ENCODE measurements at regions of chr10 and their contacts with region 1.

Region 1: GRCh38 chr10:11515596-11516430 is 95.6 kb downstream of the USP6NL start:
- DNase-seq: peak; percentile 70
- ATAC-seq: peak; percentile 95
- H3K4me3 ChIP-seq: no peak overlapping the region
- H3K27ac ChIP-seq: no peak overlapping the region
- H3K4me1 ChIP-seq: no peaks in the 10 kb centered on the region
- H3K27me3 ChIP-seq: no peaks in the 10 kb centered on the region
- CTCF ChIP-seq: peak; percentile 93
- POLR2A ChIP-seq: peak; percentile 46; the same call in 1 of the 2 replicates
- RAD21 ChIP-seq: peak; percentile 96

Region 2: GRCh38 chr10:11225935-11226334 is 289.9 kb before region 1 on chr10:
- CTCF ChIA-PET with region 1: no interaction called
- POLR2A ChIA-PET with region 1: no interaction called
- dilution Hi-C with region 1: no loop called
- in situ Hi-C with region 1: no loop called
- intact Hi-C with region 1: no loop called
- DNase-seq: no peak
- ATAC-seq: no peak
- H3K4me3 ChIP-seq: no peak overlapping the region
- H3K27ac ChIP-seq: no peak overlapping the region
- H3K4me1 ChIP-seq: no peaks in the 10 kb centered on the region
- H3K27me3 ChIP-seq: no peaks in the 10 kb centered on the region
- CTCF ChIP-seq: no peak
- POLR2A ChIP-seq: no peak
- RAD21 ChIP-seq: no peak

Region 3: DNA sequence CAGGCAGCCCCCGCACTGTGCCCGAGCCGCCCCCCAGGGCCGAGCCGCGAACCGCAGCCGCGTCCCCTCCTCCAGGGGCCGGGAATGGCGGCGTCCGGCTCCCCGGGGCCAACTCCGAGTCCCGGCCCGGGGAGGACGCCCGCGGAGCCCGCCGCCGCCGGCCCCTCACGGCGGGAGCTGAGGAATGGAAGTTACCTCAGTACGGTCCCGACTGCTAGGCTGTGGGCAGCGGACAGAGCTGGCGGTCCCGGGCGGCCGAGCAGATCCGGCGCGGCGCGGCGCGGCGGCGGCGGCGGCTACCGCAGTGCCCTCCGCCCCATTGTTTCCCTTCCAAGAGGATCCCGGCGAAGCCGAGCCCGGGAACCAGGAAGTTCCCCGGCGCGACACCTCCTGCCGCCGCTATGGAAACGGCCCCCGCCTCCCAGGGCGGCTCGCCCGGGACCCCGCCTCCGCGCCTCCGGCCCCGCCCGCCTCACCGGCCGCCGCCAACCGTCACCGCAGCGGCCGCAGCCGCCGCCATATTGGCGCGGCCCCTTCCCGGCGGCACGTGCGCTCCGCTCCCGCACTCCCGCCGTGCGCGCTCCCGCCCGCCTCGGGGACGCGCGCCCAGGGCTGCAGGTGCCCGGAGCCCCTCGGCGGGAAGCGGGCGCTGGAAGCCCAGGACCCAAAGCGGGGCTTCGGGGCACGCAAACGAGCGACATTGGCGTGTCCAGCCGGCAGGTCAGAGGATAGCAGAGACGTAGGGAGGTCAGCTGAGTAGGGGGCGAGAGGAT is 95.6 kb after region 1 on chr10 and contains the start of gene USP6NL:
- CTCF ChIA-PET with region 1: no interaction called
- POLR2A ChIA-PET with region 1: no interaction called
- dilution Hi-C with region 1: no loop called
- in situ Hi-C with region 1: no loop called
- intact Hi-C with region 1: loop called (anchors 5 kb)
- DNase-seq: peak; percentile 74
- ATAC-seq: peak; percentile 97
- H3K4me3 ChIP-seq: peak within 1 kb of the TSS; percentile 87
- H3K27ac ChIP-seq: peak within 1 kb of the TSS; percentile 59; the same call in 1 of the 2 replicates
- H3K4me1 ChIP-seq: peaks cover 4% of the 10 kb centered on the region
- H3K27me3 ChIP-seq: no peaks in the 10 kb centered on the region
- CTCF ChIP-seq: no peak
- POLR2A ChIP-seq: peak; percentile 56; the same call in 1 of the 2 replicates
- RAD21 ChIP-seq: no peak
- total RNA-seq, gene USP6NL: 9.1 and 11.9 TPM in 2 replicates

Region 4: GRCh38 chr10:11625019-11625735 is 109.4 kb after region 1 on chr10:
- CTCF ChIA-PET with region 1: no interaction called
- POLR2A ChIA-PET with region 1: no interaction called
- dilution Hi-C with region 1: no loop called
- in situ Hi-C with region 1: no loop called
- intact Hi-C with region 1: no loop called
- DNase-seq: no peak
- ATAC-seq: no peak
- H3K4me3 ChIP-seq: no peak overlapping the region
- H3K27ac ChIP-seq: no peak overlapping the region
- H3K4me1 ChIP-seq: no peaks in the 10 kb centered on the region
- H3K27me3 ChIP-seq: peaks cover 3% of the 10 kb centered on the region
- CTCF ChIP-seq: no peak
- POLR2A ChIP-seq: no peak
- RAD21 ChIP-seq: no peak

Region 5: GRCh38 chr10:11719496-11720217 is 203.8 kb after region 1 on chr10:
- CTCF ChIA-PET with region 1: interaction called, 16 read pairs
- POLR2A ChIA-PET with region 1: no interaction called
- dilution Hi-C with region 1: no loop called
- in situ Hi-C with region 1: loop called (anchors 5 kb)
- intact Hi-C with region 1: loop called (anchors 2 kb)
- DNase-seq: no peak
- ATAC-seq: no peak
- H3K4me3 ChIP-seq: no peak overlapping the region
- H3K27ac ChIP-seq: no peak overlapping the region
- H3K4me1 ChIP-seq: no peaks in the 10 kb centered on the region
- H3K27me3 ChIP-seq: peaks cover 5% of the 10 kb centered on the region
- CTCF ChIP-seq: no peak
- POLR2A ChIP-seq: no peak
- RAD21 ChIP-seq: no peak

Region 6: GRCh38 chr10:11724938-11725776 is 209.3 kb after region 1 on chr10:
- CTCF ChIA-PET with region 1: interaction called, 16 read pairs
- POLR2A ChIA-PET with region 1: no interaction called
- dilution Hi-C with region 1: no loop called
- in situ Hi-C with region 1: loop called (anchors 5 kb)
- intact Hi-C with region 1: loop called (anchors 1 kb)
- DNase-seq: peak; percentile 79
- ATAC-seq: peak; percentile 96
- H3K4me3 ChIP-seq: no peak overlapping the region
- H3K27ac ChIP-seq: no peak overlapping the region
- H3K4me1 ChIP-seq: no peaks in the 10 kb centered on the region
- H3K27me3 ChIP-seq: peaks cover 10% of the 10 kb centered on the region
- CTCF ChIP-seq: peak; percentile 83
- POLR2A ChIP-seq: peak; percentile 28; the same call in 1 of the 2 replicates
- RAD21 ChIP-seq: peak; percentile 93

Region 7: DNA sequence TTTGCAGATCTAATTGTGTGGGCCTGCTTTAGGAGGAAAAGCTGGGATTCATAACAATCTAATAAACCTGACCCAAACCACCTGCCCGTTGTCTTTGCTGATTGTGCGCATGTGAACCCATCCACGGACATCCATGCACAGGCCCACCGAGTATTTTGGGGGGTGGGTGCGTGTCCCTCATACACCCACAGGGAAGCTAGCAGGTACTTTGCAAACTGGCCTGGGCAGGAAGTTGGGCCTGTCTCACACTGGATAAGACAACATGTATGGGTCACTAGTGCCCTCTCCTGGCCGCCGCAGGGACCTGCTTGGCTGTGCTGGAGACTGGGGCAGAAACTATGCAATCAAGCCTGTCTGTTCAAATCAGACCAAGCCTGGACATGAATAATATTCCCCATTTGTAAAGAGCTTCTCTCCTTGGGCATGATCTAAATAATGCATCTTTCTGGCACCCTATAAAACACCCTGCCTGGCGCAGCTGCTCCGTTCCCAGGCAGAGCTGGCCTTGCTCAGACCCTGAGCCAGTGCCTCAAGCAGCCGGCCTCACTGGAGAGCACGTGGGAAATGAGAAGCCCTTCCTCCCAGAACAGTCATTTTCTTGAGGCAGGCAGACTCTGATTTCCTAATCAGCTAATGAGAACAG is 242.1 kb after region 1 on chr10:
- CTCF ChIA-PET with region 1: interaction called, 23 read pairs
- POLR2A ChIA-PET with region 1: no interaction called
- dilution Hi-C with region 1: no loop called
- in situ Hi-C with region 1: loop called (anchors 10 kb)
- intact Hi-C with region 1: loop called (anchors 1 kb)
- DNase-seq: peak; percentile 81
- ATAC-seq: peak; percentile 98
- H3K4me3 ChIP-seq: no peak overlapping the region
- H3K27ac ChIP-seq: 0 out of 2 replicates have a peak overlapping the region, but pooled peaks have one; percentile 16
- H3K4me1 ChIP-seq: peaks cover 7% of the 10 kb centered on the region; the same call in 1 of the 2 replicates
- H3K27me3 ChIP-seq: no peaks in the 10 kb centered on the region
- CTCF ChIP-seq: peak; percentile 90
- POLR2A ChIP-seq: 0 out of 2 replicates have a peak, but pooled peaks have one; percentile 28
- RAD21 ChIP-seq: peak; percentile 89

Region 8: DNA sequence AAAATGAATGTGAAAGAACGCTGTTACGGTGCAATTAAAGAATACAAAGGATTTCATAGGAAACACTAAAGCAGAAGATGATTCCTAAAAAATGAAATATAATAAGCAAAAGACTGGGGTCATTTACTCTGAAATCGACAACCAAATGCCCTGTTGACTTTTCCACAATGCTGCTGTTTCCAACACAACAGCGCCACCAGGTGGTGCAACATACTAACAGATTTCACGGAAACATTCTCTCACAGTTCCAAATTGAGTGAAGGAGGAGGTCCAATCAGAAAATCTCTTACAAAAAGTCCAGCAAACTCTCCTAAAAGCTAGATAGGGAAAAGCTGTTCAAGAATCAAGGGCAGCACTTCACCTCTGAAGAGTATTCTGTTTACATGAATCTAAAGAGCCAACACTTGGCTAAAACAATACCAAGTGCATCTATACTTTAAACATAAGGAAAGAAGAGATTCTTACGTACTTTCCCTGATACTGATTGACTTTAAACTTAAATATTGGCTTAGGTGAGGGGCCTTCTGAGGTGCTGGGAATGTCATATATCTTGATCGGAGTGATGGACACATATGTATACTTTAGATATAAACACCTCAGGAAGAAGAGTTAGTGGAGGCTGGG is 470.9 kb after region 1 on chr10:
- CTCF ChIA-PET with region 1: no interaction called
- POLR2A ChIA-PET with region 1: no interaction called
- dilution Hi-C with region 1: no loop called
- in situ Hi-C with region 1: no loop called
- intact Hi-C with region 1: loop called (anchors 5 kb)
- DNase-seq: peak; percentile 84
- ATAC-seq: peak; percentile 89
- H3K4me3 ChIP-seq: no peak overlapping the region
- H3K27ac ChIP-seq: no peak overlapping the region
- H3K4me1 ChIP-seq: no peaks in the 10 kb centered on the region
- H3K27me3 ChIP-seq: no peaks in the 10 kb centered on the region
- CTCF ChIP-seq: peak; percentile 89
- POLR2A ChIP-seq: no peak
- RAD21 ChIP-seq: peak; percentile 86

Measured in IMR-90 (cell line).